MCF 10A (cell line): ENCODE measurements at regions of chr6 and their contacts with region 1.

Region 1: DNA sequence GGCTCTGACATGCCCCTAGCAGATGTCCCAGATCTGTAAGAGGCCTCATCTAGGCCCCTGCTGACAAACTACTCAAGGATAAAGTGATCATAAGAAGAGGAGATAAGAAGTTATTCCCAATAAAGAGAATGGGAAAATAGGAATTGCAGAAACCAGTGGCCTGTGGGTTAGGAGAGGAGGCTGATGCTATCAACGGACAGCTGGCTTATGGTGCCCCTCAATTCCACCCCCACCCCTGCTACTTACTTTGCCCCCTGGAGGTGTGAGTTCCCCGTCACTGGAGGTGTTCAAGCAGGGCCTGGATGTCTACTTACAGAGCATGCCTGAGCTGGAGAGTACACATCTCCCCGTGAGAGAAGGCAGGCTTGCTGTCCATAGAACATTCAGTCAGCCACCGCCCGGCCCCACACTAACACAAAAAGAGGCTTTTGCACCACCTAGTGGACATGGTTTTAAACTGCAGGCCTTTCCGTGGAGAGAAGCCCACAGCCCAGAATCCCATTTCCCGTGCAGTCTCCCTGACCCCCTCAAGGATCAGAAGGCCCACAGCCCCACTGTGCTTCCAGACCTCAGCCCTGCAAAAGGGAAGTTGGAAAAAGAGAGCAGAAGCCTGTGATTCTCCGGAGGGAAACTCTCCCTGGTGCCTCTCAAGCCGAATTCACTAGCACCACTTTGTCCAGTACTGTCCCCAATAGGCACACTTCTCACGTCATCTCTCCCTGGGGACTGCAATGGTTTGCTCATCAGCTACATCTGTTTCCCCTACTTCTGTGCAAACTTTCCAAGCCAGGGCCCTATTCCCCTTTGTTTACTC is 23.8 kb upstream of the BNIP5 start:
- DNase-seq: peak; percentile 84
- H3K4me3 Mint-ChIP-seq: no peak overlapping the region
- H3K27ac Mint-ChIP-seq: no peak overlapping the region
- H3K4me1 Mint-ChIP-seq: no peaks in the 10 kb centered on the region
- H3K27me3 Mint-ChIP-seq: no peaks in the 10 kb centered on the region
- CTCF ChIP-seq: peak; percentile 86

Region 2: DNA sequence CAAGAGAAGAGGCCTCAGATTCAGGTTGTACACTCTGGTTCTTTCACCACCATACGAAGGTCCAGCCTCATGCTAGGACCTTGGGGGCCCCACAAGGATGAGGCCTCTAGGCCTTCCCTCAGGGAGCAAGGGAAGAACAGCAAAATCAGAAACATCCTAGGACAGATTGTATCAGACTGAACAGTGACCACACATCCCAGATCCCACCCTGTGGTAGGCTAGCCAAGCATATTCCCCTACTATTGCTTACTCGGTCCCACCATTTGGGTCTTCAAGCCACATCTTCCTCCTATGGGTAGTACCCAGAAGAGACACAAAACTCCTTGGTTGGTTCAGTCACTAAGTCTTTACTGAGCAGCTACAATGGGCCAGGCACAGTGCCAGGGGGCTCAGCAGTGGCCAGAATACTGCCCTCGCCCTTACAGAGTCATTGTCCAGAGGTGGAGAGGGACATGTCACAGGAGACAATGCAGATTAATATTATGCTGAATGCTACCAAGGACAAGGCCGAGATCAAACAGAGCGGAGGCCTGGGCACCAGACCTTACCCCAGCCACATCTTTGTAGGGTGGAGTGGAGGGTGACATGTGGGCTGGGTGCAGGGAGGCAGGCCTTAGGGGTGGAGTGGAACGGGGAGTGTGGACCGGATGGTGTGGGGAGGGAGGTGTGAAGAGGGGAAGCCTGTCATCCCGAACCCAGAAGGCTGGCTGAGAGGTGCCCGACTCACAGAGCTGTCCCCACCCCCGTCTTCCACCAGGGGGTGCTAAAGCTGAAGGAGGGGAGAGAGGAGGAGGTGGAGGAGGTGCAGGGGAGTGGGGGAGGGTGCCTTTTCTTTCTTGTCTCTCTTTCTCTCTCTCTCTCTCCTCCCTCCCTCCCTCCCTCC is 236.9 kb before region 1 on chr6:
- CTCF ChIA-PET with region 1: interaction called, 9 read pairs
- POLR2A ChIA-PET with region 1: no interaction called
- intact Hi-C with region 1: loop called (anchors 1 kb)
- DNase-seq: peak; percentile 92
- H3K4me3 Mint-ChIP-seq: no peak overlapping the region
- H3K27ac Mint-ChIP-seq: no peak overlapping the region
- H3K4me1 Mint-ChIP-seq: peaks cover 18% of the 10 kb centered on the region
- H3K27me3 Mint-ChIP-seq: no peaks in the 10 kb centered on the region
- CTCF ChIP-seq: peak; percentile 80

Region 3: DNA sequence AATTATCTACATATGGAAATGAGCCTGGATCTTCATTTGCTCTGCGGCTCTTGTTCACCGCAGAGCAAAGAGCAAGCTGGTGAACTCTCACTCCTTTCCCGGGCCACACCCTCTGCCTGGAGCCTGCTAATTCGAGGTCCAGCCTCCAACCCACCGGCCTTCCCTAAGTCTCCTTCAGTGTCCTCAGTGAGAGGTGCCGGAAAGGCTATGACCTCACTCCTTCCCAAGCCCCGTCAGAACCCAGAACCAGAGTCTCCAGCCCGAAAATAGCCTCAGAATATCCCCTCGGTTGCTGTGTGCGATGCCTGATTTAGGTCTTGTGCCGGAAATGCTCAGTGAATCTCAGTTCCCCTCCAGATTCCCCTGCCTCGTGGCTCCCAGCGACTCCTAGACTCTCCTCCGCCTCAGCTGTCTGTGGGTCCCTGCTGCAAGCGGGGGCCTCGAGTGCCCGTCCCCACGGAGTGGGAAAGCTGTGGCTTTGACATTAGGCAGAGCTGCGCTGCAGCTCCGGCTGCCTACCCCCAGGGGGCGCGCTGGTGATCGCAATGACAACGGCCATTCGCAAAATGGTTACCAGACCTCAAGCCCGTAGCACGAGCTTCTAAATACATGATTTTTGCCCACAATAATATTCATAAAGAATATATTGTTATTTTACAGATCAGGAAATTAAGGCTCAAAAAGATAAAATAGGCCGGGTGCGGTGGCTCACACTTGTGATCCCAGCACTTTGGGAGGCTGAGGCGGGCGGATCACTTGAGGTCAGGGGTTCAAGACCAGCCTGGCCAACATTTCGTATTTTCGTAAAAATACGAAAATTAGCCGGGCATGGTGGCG is 19.6 kb before region 1 on chr6:
- CTCF ChIA-PET with region 1: interaction called, 43 read pairs
- POLR2A ChIA-PET with region 1: interaction called, 3 read pairs
- intact Hi-C with region 1: no loop called
- DNase-seq: peak; percentile 60
- H3K4me3 Mint-ChIP-seq: no peak overlapping the region
- H3K27ac Mint-ChIP-seq: no peak overlapping the region
- H3K4me1 Mint-ChIP-seq: no peaks in the 10 kb centered on the region
- H3K27me3 Mint-ChIP-seq: peaks cover 44% of the 10 kb centered on the region
- CTCF ChIP-seq: peak; percentile 77

Region 4: GRCh38 chr6:37018198-37019064 is 658.0 kb after region 1 on chr6:
- CTCF ChIA-PET with region 1: no interaction called
- POLR2A ChIA-PET with region 1: no interaction called
- intact Hi-C with region 1: no loop called
- DNase-seq: peak; percentile 87
- H3K4me3 Mint-ChIP-seq: no peak overlapping the region
- H3K27ac Mint-ChIP-seq: no peak overlapping the region
- H3K4me1 Mint-ChIP-seq: peaks cover 26% of the 10 kb centered on the region
- H3K27me3 Mint-ChIP-seq: no peaks in the 10 kb centered on the region
- CTCF ChIP-seq: peak; percentile 72